ENCODE measurements at regions of chr2 and their contacts with region 1.

Region 1: GRCh38 chr2:231720987-231721966 is 13.0 kb downstream of the PTMA start:
- DNase-seq: no peak
- ATAC-seq: no peak
- H3K4me3 ChIP-seq: no peak overlapping the region
- H3K27ac ChIP-seq: no peak overlapping the region
- H3K4me1 ChIP-seq: 0 out of 2 replicates have a peak, but pooled peaks cover 4% of the 10 kb centered on the region
- H3K27me3 ChIP-seq: no peaks in the 10 kb centered on the region
- CTCF ChIP-seq: no peak

Region 2: GRCh38 chr2:230347659-230348305 is 1373.5 kb before region 1 on chr2:
- CTCF ChIA-PET with region 1: no interaction called
- POLR2A ChIA-PET with region 1: interaction called, 10 read pairs
- in situ Hi-C with region 1: no loop called
- intact Hi-C with region 1: no loop called
- DNase-seq: no peak
- ATAC-seq: no peak
- H3K4me3 ChIP-seq: no peak overlapping the region
- H3K27ac ChIP-seq: no peak overlapping the region
- H3K4me1 ChIP-seq: no peaks in the 10 kb centered on the region
- H3K27me3 ChIP-seq: no peaks in the 10 kb centered on the region
- CTCF ChIP-seq: no peak